Psoas muscle (tissue), 8 donors: ENCODE measurements at regions of chr10 and their contacts with region 1.

Region 1: GRCh38 chr10:4767033-4767814 is 58.8 kb upstream of the AKR1E2 start:
- DNase-seq: no peak
- ATAC-seq: peak; percentile 50 to 81 (median 72)
- H3K4me3 ChIP-seq: no peak overlapping the region
- H3K27ac ChIP-seq: peak overlapping the region; percentile 61
- H3K4me1 ChIP-seq: peaks cover 74% of the 10 kb centered on the region
- H3K27me3 ChIP-seq: no peaks in the 10 kb centered on the region
- CTCF ChIP-seq: peak; percentile 87

Region 2: GRCh38 chr10:3197348-3198003 is 1569.7 kb before region 1 on chr10:
- intact Hi-C with region 1: loop called in 1 of 2 experiments (anchors 2 kb)
- DNase-seq: peak; percentile 82 to 89
- ATAC-seq: peak; percentile 94 to 98 (median 96)
- H3K4me3 ChIP-seq: peak overlapping the region; percentile 33
- H3K27ac ChIP-seq: no peak overlapping the region
- H3K4me1 ChIP-seq: peaks cover 7% of the 10 kb centered on the region
- H3K27me3 ChIP-seq: no peaks in the 10 kb centered on the region
- CTCF ChIP-seq: peak; percentile 89

Region 3: DNA sequence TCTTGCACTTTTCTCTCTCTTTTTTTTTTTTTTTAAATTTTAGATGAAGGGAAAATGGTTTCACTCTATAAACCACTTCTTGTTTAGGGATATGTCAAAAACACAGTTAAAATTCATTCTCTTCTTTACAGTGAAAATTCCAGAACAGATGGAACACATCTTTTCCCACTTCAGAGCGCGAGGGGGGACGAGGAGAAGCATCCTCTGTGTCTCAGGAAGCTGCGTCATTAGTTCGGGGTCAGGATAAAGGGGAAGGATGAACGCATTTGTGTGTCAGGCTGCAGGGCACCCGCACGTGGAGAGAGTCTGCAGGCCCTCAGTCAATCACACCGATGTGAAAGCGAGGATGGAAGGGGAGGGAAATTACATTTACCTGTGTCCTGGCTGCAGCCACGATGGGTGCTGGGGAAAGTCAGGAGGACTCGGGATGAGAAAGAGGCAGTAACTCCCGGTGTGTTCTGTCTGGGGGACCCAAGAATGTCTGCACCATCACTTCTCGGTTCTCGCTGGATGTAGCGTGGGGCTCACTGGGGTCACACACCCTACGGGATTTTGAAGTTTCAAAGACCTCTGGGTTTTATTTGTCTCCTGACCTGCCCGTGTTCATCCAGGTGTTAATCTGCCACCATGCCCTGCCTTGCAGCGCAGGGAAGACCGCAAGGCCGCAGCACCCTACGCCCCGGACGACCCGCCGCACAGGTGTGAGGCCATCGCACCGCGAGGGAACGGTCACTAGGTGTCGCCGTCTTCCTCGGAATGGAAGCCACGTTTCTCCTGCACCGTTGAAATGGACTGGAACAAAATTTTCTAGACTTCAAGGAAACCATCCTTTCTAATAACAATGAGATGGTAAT is 1527.9 kb before region 1 on chr10:
- intact Hi-C with region 1: loop called (anchors 2 to 5 kb)
- DNase-seq: peak; percentile 72 to 83
- ATAC-seq: peak; percentile 84 to 97 (median 88)
- H3K4me3 ChIP-seq: peak overlapping the region; percentile 34
- H3K27ac ChIP-seq: peak overlapping the region; percentile 58
- H3K4me1 ChIP-seq: no peaks in the 10 kb centered on the region
- H3K27me3 ChIP-seq: peaks cover 0 to 4% (median 0%) of the 10 kb centered on the region in 3 donors
- CTCF ChIP-seq: peak; percentile 93

Region 4: DNA sequence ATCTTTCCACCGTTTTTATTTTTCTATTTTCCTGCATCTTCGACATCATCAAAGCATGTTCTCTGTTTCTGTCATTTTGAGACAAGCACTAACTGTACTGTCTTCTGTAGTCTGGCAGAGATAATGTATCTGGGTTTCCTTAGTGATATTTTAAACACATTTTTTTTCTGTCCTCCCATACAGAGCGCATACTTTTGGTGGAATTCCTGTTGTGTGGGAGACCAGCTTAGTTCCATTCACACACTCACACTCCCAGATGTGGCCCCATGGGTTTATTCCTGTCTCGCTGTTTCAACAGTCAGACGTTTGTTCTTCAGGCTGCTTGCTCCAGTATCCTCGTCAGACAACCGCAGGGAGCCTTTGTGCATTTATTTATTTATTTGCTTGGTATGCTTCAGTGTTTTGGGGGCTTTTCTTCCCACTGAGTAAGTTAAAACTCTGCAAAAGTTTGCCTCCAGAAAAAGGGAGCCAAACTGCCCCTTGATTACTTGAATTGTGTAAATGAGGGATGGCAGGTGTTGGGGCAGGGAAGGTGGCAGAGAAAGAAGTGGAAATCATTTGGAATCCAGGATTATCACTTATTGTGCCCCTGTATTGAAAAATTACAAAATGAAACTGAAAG is 525.4 kb before region 1 on chr10:
- intact Hi-C with region 1: loop called in 1 of 2 experiments (anchors 5 kb)
- DNase-seq: no peak
- ATAC-seq: peak; percentile 50 to 79 (median 64)
- H3K4me3 ChIP-seq: peak overlapping the region; percentile 48
- H3K27ac ChIP-seq: peak overlapping the region; percentile 73
- H3K4me1 ChIP-seq: peaks cover 33% of the 10 kb centered on the region
- H3K27me3 ChIP-seq: no peaks in the 10 kb centered on the region
- CTCF ChIP-seq: no peak

Region 5: GRCh38 chr10:4656576-4657182 is 110.5 kb before region 1 on chr10:
- intact Hi-C with region 1: loop called in 1 of 2 experiments (anchors 5 kb)
- DNase-seq: peak; percentile 40 to 63
- ATAC-seq: peak; percentile 68 to 76 (median 71)
- H3K4me3 ChIP-seq: no peak overlapping the region
- H3K27ac ChIP-seq: no peak overlapping the region
- H3K4me1 ChIP-seq: peaks cover 8% of the 10 kb centered on the region
- H3K27me3 ChIP-seq: no peaks in the 10 kb centered on the region
- CTCF ChIP-seq: peak; percentile 93